ENCODE measurements at regions of chr9 and their contacts with region 1.

Region 1: GRCh38 chr9:4923580-4924544 is 61.2 kb upstream of the JAK2 start:
- DNase-seq: peak in 5 of 9 donors; percentile 27 to 41 (median 31)
- ATAC-seq: peak; percentile 71
- H3K4me3 ChIP-seq: no peak overlapping the region
- H3K4me3 Mint-ChIP-seq: no peak overlapping the region
- H3K27ac ChIP-seq: no peak overlapping the region
- H3K27ac Mint-ChIP-seq: peak overlapping the region in 3 of 9 donors; percentile 12 to 76 (median 62)
- H3K4me1 ChIP-seq: no peaks in the 10 kb centered on the region
- H3K4me1 Mint-ChIP-seq: peaks cover 0 to 32% (median 4%) of the 10 kb centered on the region in 7 donors
- H3K27me3 ChIP-seq: no peaks in the 10 kb centered on the region
- H3K27me3 Mint-ChIP-seq: no peaks in the 10 kb centered on the region

Region 2: GRCh38 chr9:4604678-4605095 is 319.2 kb before region 1 on chr9:
- CTCF ChIA-PET with region 1: no interaction called
- POLR2A ChIA-PET with region 1: no interaction called
- intact Hi-C with region 1: loop called in 1 of 2 experiments (anchors 2 kb)
- DNase-seq: peak in 8 of 9 donors; percentile 38 to 77 (median 60)
- ATAC-seq: peak; percentile 88
- H3K4me3 ChIP-seq: peak overlapping the region; percentile 18
- H3K4me3 Mint-ChIP-seq: peak overlapping the region in 3 of 10 donors; percentile 40 to 53 (median 50)
- H3K27ac ChIP-seq: no peak overlapping the region
- H3K27ac Mint-ChIP-seq: peak overlapping the region in 6 of 9 donors; percentile 17 to 85 (median 82)
- H3K4me1 ChIP-seq: peaks cover 16 to 29% of the 10 kb centered on the region in 2 donors
- H3K4me1 Mint-ChIP-seq: peaks cover 12 to 52% (median 32%) of the 10 kb centered on the region in 7 donors
- H3K27me3 ChIP-seq: no peaks in the 10 kb centered on the region
- H3K27me3 Mint-ChIP-seq: no peaks in the 10 kb centered on the region

Region 3: GRCh38 chr9:4964540-4964939 is 40.7 kb after region 1 on chr9:
- CTCF ChIA-PET with region 1: interaction called, 3 read pairs
- POLR2A ChIA-PET with region 1: no interaction called
- intact Hi-C with region 1: loop called in 1 of 2 experiments (anchors 2 kb)
- DNase-seq: no peak
- ATAC-seq: no peak
- H3K4me3 ChIP-seq: no peak overlapping the region
- H3K4me3 Mint-ChIP-seq: no peak overlapping the region
- H3K27ac ChIP-seq: no peak overlapping the region
- H3K27ac Mint-ChIP-seq: no peak overlapping the region
- H3K4me1 ChIP-seq: no peaks in the 10 kb centered on the region
- H3K4me1 Mint-ChIP-seq: peaks cover 0 to 41% (median 0%) of the 10 kb centered on the region in 7 donors
- H3K27me3 ChIP-seq: no peaks in the 10 kb centered on the region
- H3K27me3 Mint-ChIP-seq: peaks cover 0 to 3% (median 0%) of the 10 kb centered on the region in 5 donors

Region 4: DNA sequence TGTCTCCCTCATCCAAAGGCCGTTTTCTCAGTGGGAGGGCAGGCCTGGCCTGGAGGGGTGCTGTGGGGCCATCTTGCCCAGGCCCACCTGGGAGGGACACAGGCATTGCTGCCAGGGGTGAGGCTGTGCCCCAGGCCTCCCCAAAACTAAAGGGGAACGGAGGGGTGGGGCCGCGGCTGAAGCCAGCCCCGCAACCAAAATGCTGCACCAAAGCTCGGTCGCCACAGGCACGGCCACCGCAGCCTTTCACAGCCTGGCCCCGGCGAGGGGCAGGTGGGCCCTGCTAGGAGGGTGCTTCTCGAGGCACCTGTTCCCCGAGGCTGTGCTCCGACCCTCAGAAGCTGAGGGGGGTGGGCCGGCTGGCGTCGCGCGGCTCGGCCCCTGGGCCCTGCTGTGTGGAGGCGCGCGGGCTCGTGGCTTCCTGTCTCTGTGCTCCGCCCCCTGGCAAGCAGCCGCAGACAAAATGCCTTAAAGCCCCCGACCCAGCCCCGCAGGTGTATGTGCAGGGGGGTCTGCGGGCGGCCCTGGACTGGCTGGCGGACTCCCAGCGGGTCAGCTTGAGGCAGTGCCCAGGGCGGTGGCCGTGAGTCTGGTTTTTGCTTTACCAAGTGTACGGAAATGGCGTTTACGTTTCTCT is 118.9 kb after region 1 on chr9:
- CTCF ChIA-PET with region 1: no interaction called
- POLR2A ChIA-PET with region 1: no interaction called
- intact Hi-C with region 1: no loop called
- DNase-seq: peak in 1 of 9 donors; percentile 15
- ATAC-seq: no peak
- H3K4me3 ChIP-seq: no peak overlapping the region
- H3K4me3 Mint-ChIP-seq: peak overlapping the region in 4 of 10 donors; percentile 56 to 76 (median 60)
- H3K27ac ChIP-seq: no peak overlapping the region
- H3K27ac Mint-ChIP-seq: peak overlapping the region in 2 of 9 donors; percentile 46 to 74
- H3K4me1 ChIP-seq: no peaks in the 10 kb centered on the region
- H3K4me1 Mint-ChIP-seq: peaks cover 0 to 18% (median 0%) of the 10 kb centered on the region in 7 donors
- H3K27me3 ChIP-seq: no peaks in the 10 kb centered on the region
- H3K27me3 Mint-ChIP-seq: no peaks in the 10 kb centered on the region

Region 5: GRCh38 chr9:6428940-6429889 is 1505.4 kb after region 1 on chr9:
- CTCF ChIA-PET with region 1: no interaction called
- POLR2A ChIA-PET with region 1: no interaction called
- intact Hi-C with region 1: loop called in 1 of 2 experiments (anchors 5 kb)
- DNase-seq: peak in 1 of 9 donors; percentile 12
- ATAC-seq: peak; percentile 78
- H3K4me3 ChIP-seq: no peak overlapping the region
- H3K4me3 Mint-ChIP-seq: peak overlapping the region in 9 of 10 donors; percentile 1 to 80 (median 50)
- H3K27ac ChIP-seq: no peak overlapping the region
- H3K27ac Mint-ChIP-seq: peak overlapping the region in 8 of 9 donors; percentile 20 to 85 (median 57)
- H3K4me1 ChIP-seq: peaks cover 15 to 45% of the 10 kb centered on the region in 2 donors
- H3K4me1 Mint-ChIP-seq: peaks cover 52 to 90% (median 75%) of the 10 kb centered on the region in 7 donors
- H3K27me3 ChIP-seq: no peaks in the 10 kb centered on the region
- H3K27me3 Mint-ChIP-seq: no peaks in the 10 kb centered on the region